ENCODE measurements at regions of chr2 and their contacts with region 1.

Region 1: DNA sequence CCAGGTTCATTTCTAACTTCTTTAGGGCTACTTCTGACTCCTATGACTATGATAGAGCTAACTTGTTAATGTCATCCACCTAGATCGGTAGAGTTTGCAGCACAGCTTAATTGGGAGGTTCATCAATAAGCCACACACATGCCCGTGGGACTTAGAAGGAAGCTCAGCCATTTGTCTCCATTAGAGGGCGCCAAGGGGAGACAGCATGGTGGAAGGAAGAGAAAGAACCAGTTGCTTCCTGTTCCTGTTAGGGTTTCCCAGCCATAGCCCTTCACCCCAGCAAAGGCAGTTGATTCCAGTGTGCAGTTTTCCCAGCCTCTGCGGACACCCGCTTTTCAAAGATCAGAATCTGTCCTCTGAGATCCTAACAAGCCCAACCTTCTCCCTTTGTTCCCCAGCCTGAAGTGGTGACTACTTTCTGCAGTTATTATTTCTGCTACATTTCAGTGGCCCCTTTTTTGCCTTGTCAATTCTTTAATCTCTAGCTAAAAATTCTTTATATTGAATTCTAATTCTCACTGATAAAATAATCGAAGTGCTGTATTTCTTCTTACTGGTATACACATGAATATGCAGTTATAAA is 30.3 kb downstream of the MAIP1 start:
- DNase-seq: peak; percentile 88
- H3K4me3 Mint-ChIP-seq: no peak overlapping the region
- H3K27ac Mint-ChIP-seq: no peak overlapping the region
- H3K4me1 Mint-ChIP-seq: peaks cover 6% of the 10 kb centered on the region
- H3K27me3 Mint-ChIP-seq: peaks cover 2% of the 10 kb centered on the region

Region 2: GRCh38 chr2:199160677-199161465 is 824.8 kb before region 1 on chr2:
- intact Hi-C with region 1: no loop called
- DNase-seq: no peak
- H3K4me3 Mint-ChIP-seq: no peak overlapping the region
- H3K27ac Mint-ChIP-seq: no peak overlapping the region
- H3K4me1 Mint-ChIP-seq: no peaks in the 10 kb centered on the region
- H3K27me3 Mint-ChIP-seq: no peaks in the 10 kb centered on the region

Region 3: GRCh38 chr2:200373973-200374416 is 388.3 kb after region 1 on chr2:
- intact Hi-C with region 1: loop called (anchors 10 kb)
- DNase-seq: peak; percentile 86
- H3K4me3 Mint-ChIP-seq: peak overlapping the region; percentile 84
- H3K27ac Mint-ChIP-seq: peak overlapping the region; percentile 80
- H3K4me1 Mint-ChIP-seq: peaks cover 52% of the 10 kb centered on the region
- H3K27me3 Mint-ChIP-seq: no peaks in the 10 kb centered on the region

Measured in activated CD4-positive, alpha-beta T cell treated with anti-CD3 and anti-CD28 coated beads, Interleukin-2, amount 10 ng/mL, durations not matched to agents 24 days and 14 days (primary cell).